ENCODE measurements at regions of chr1 and their contacts with region 1.

Region 1: GRCh38 chr1:151281969-151282882 is at the start of gene ZNF687:
- DNase-seq: peak; percentile 100
- ATAC-seq: peak; percentile 92
- H3K4me3 ChIP-seq: peak within 1 kb of the TSS; percentile 59 to 79
- H3K27ac ChIP-seq: peak within 1 kb of the TSS; percentile 92
- H3K4me1 ChIP-seq: peaks cover 11 to 25% of the 10 kb centered on the region in 2 experiments
- H3K27me3 ChIP-seq: no peaks in the 10 kb centered on the region
- CTCF ChIP-seq: no peak
- POLR2A ChIP-seq: peak; percentile 32
- RAD21 ChIP-seq: no peak
- total RNA-seq, gene ZNF687: 34.3 TPM

Region 2: GRCh38 chr1:151399890-151400495 is 117.8 kb after region 1 on chr1:
- CTCF ChIA-PET with region 1: no interaction called
- POLR2A ChIA-PET with region 1: no interaction called
- RAD21 ChIA-PET with region 1: no interaction called
- intact Hi-C with region 1: loop called (anchors 1 kb)
- DNase-seq: no peak
- ATAC-seq: peak; percentile 32
- H3K4me3 ChIP-seq: peak overlapping the region; percentile 86 to 98
- H3K27ac ChIP-seq: peak overlapping the region; percentile 81
- H3K4me1 ChIP-seq: peaks cover 4 to 26% of the 10 kb centered on the region in 2 experiments; a peak in 3 of 4 replicates
- H3K27me3 ChIP-seq: no peaks in the 10 kb centered on the region
- CTCF ChIP-seq: no peak
- POLR2A ChIP-seq: no peak
- RAD21 ChIP-seq: no peak

Region 3: GRCh38 chr1:151547119-151547899 is 265.1 kb after region 1 on chr1:
- CTCF ChIA-PET with region 1: no interaction called
- POLR2A ChIA-PET with region 1: no interaction called
- RAD21 ChIA-PET with region 1: no interaction called
- intact Hi-C with region 1: no loop called
- DNase-seq: peak; percentile 35
- ATAC-seq: peak; percentile 77
- H3K4me3 ChIP-seq: peak overlapping the region in 1 of 2 experiments; percentile 36; a peak in 2 of 4 replicates
- H3K27ac ChIP-seq: peak overlapping the region; percentile 33
- H3K4me1 ChIP-seq: peaks cover 38 to 51% of the 10 kb centered on the region in 2 experiments
- H3K27me3 ChIP-seq: no peaks in the 10 kb centered on the region
- CTCF ChIP-seq: no peak
- POLR2A ChIP-seq: no peak
- RAD21 ChIP-seq: no peak